ENCODE measurements at regions of chr6 and their contacts with region 1.

Region 1: GRCh38 chr6:107977283-107977682 is 19.3 kb upstream of the SEC63 start:
- DNase-seq: no peak
- CTCF ChIP-seq: peak; percentile 6

Region 2: DNA sequence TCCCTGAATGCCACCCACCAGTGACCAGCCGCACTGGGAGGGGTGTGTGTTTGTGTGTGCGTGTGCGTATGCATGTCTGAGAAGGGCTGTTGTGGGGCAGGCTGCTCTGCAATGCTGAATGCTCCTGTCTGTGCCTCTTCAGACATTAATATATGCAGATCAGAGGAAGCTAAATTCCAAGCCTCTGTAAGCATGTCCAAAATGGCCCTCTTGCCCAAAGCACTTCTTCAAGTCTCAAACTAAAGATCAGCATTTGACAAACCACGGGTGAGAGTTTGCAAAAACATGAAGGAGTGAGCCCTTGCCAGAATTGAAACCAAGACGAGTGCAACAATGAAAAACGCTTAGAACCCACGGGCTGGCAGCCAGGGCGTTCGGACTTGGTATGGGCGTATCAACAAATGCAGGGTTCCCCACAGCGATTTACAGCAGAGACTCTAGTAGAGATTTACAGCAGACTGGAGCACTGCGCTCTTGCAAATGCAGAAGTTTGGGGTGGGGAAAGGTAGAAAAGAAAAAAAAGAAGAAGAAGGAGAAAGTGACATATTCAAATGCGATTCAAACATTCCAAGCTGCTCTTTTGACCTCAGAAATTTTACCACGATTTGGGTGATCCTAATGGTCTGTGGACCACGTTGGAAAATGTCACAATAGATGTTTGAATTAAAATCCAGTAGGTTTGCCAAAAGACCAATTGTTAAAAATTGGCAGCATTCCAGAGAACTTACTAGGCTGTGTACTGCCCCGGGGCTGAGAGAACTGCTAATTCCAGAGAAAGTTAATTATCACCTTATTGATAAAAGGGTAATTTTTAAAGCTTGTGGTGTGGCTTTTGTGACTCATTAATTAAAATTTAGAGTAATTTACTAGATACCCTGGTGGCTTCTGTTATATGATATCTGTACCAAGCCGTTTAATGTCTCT is 156.7 kb before region 1 on chr6:
- in situ Hi-C with region 1: no loop called
- DNase-seq: no peak
- CTCF ChIP-seq: no peak

Region 3: GRCh38 chr6:108133594-108134179 is 156.4 kb after region 1 on chr6:
- in situ Hi-C with region 1: no loop called
- DNase-seq: peak; percentile 60
- CTCF ChIP-seq: no peak

Region 4: GRCh38 chr6:108518714-108519576 is 541.7 kb after region 1 on chr6:
- in situ Hi-C with region 1: loop called (anchors 25 kb)
- DNase-seq: no peak
- CTCF ChIP-seq: no peak